Heart right ventricle (tissue), 16 donors: ENCODE measurements at regions of chr6 and their contacts with region 1.

Region 1: DNA sequence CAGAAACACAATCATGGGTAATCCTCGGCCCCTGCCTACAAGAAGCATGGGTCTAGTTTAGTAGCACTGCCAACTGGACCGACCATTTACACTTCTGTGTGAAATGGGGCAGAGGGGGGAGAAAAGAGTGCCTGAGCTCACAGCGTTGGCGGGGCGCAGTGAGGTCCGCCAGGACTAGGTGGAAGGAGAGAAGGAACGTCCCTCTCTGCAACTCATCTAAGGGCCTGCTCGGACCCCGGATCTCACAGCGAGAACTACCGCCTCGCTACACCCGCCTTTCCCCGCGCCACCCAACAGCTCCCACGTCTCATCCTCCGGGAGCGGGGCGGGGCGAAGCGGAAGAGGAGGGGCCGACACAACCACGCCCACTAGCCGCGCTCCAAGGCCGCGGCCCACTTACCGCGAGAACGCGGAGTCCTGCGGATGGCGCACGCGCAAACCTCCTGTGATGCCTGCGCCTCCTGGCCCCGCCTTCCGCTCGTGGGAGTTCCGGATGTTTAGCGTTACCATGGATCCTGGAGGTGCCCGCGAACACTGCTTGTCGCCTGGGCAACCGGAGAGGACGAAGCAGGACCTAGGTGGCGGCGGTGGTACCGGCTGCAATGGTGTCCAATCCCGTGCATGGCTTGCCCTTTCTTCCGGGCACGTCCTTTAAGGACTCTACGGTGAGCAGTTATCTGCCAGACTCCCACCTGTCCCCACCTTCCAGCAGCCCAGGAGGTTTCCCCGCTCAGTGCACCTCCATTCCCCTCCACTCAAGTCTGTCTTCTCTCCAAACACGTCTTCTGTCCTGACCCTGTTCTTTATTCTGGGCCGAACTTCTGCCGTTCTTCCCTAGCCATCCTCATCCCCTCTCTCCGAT is at the start of gene EFHC1:
- DNase-seq: peak; percentile 98 to 99
- ATAC-seq: peak; percentile 96 to 98 (median 97)
- H3K4me3 ChIP-seq: peak within 1 kb of the TSS; percentile 60 to 91 (median 80)
- H3K27ac ChIP-seq: peak within 1 kb of the TSS; percentile 52 to 94 (median 87)
- H3K4me1 ChIP-seq: peaks cover 0 to 62% (median 23%) of the 10 kb centered on the region in 9 donors
- H3K27me3 ChIP-seq: no peaks in the 10 kb centered on the region
- CTCF ChIP-seq: peak in 1 of 9 donors; percentile 3
- total RNA-seq, gene EFHC1: 3.3 to 7.6 (median 5.8) TPM

Region 2: DNA sequence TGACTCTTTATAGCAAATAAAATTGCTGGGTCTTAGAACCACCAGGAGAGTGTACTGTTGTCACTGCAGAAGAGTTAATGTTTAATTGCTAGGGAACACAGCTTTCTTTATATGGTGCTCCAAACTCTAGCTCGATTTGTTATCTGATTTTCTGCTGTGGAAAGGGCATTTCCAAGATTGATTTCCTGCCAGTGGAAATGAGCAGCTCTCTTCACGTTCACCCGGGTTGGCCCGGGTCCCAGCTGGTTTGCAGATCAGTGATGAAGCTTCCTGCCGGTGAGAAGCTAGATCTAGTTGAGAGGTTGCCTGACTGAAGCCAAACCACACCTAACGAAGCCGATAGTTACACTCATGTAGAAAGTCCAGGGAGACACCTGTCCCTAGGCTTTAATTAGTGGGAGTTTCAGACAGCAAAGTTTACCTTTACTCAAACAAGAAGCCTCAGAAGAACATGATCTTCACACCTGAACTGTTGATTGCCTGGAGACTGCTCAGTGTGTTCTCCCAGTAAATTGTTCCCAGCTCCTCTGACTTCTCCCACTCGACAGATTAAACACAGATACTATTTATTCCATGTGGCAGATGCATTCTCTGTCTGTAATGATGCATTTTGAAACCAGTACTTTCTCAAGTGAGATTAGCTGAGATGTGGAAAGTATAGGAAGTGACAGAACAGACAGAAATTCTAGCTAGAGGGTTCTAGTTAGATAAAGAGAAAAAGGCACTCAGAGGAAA is 30.2 kb before region 1 on chr6:
- intact Hi-C with region 1: no loop called
- DNase-seq: peak in 1 of 2 donors; percentile 54
- ATAC-seq: peak in 6 of 8 donors; percentile 51 to 79 (median 70)
- H3K4me3 ChIP-seq: no peak overlapping the region
- H3K27ac ChIP-seq: peak overlapping the region in 3 of 10 donors; percentile 12 to 70 (median 34)
- H3K4me1 ChIP-seq: peaks cover 3 to 27% (median 17%) of the 10 kb centered on the region in 9 donors
- H3K27me3 ChIP-seq: no peaks in the 10 kb centered on the region
- CTCF ChIP-seq: no peak

Region 3: GRCh38 chr6:52497652-52498408 is 77.8 kb after region 1 on chr6:
- intact Hi-C with region 1: loop called in 7 of 10 experiments (anchors 2 to 5 kb)
- DNase-seq: peak in 1 of 2 donors; percentile 75
- ATAC-seq: peak in 6 of 8 donors; percentile 20 to 55 (median 36)
- H3K4me3 ChIP-seq: no peak overlapping the region
- H3K27ac ChIP-seq: peak overlapping the region in 9 of 10 donors; percentile 76 to 90 (median 86)
- H3K4me1 ChIP-seq: peaks cover 13 to 63% (median 42%) of the 10 kb centered on the region in 9 donors
- H3K27me3 ChIP-seq: no peaks in the 10 kb centered on the region
- CTCF ChIP-seq: no peak

Region 4: GRCh38 chr6:52503848-52504781 is 84.1 kb after region 1 on chr6:
- intact Hi-C with region 1: loop called in 9 of 10 experiments (anchors 2 to 5 kb)
- DNase-seq: peak; percentile 88 to 91
- ATAC-seq: peak; percentile 79 to 92 (median 88)
- H3K4me3 ChIP-seq: peak overlapping the region in 1 of 10 donors; percentile 4
- H3K27ac ChIP-seq: peak overlapping the region; percentile 50 to 91 (median 80)
- H3K4me1 ChIP-seq: peaks cover 19 to 79% (median 48%) of the 10 kb centered on the region in 9 donors
- H3K27me3 ChIP-seq: no peaks in the 10 kb centered on the region
- CTCF ChIP-seq: no peak

Region 5: DNA sequence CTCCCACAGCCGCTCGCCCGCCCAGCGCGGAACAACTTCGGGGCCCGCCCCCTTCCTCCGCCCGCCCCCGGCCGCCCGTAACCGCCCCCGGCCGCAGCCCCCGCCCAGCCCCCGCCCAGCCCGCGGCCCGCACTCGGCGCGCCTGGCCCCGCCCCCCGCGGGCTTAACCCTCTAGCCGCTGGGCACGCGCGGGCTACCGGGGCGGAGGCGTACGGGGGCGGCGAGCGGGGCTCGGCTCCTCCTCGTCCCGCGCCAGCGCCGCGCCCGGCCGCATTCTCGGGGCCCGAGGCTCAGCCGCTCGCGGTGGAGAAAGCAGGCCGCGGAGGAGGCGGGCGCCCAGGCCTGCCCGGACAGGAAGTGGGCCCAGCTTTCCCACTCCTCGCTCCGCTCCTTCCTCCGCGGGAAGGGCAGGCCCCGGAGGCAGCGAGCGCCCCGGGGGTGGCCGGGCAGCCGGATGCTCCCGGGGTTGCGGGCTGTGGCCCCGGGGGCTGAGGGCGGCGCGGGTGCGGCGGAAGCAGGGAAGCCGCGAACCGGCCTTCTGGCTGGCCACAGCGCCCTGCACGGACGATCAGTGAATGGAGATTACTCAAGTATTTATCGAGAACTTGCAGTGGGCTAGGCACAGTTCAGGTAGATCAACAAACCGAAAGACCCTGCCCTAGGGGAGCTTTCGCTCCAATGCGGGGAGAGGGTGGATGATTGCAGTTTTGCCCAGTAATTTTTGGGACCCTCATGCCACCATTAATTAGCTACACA is 157.2 kb after region 1 on chr6 and contains the start of gene TRAM2:
- intact Hi-C with region 1: loop called in 7 of 10 experiments (anchors 1 to 5 kb)
- DNase-seq: peak; percentile 86 to 91
- ATAC-seq: peak; percentile 75 to 94 (median 88)
- H3K4me3 ChIP-seq: peak within 1 kb of the TSS; percentile 71 to 97 (median 86)
- H3K27ac ChIP-seq: peak within 1 kb of the TSS; percentile 96 to 100 (median 99)
- H3K4me1 ChIP-seq: peaks cover 0 to 56% (median 51%) of the 10 kb centered on the region in 9 donors
- H3K27me3 ChIP-seq: no peaks in the 10 kb centered on the region
- CTCF ChIP-seq: peak in 6 of 9 donors; percentile 7 to 44 (median 14)
- total RNA-seq, gene TRAM2: 7.9 to 17.3 (median 11.0) TPM

Region 6: DNA sequence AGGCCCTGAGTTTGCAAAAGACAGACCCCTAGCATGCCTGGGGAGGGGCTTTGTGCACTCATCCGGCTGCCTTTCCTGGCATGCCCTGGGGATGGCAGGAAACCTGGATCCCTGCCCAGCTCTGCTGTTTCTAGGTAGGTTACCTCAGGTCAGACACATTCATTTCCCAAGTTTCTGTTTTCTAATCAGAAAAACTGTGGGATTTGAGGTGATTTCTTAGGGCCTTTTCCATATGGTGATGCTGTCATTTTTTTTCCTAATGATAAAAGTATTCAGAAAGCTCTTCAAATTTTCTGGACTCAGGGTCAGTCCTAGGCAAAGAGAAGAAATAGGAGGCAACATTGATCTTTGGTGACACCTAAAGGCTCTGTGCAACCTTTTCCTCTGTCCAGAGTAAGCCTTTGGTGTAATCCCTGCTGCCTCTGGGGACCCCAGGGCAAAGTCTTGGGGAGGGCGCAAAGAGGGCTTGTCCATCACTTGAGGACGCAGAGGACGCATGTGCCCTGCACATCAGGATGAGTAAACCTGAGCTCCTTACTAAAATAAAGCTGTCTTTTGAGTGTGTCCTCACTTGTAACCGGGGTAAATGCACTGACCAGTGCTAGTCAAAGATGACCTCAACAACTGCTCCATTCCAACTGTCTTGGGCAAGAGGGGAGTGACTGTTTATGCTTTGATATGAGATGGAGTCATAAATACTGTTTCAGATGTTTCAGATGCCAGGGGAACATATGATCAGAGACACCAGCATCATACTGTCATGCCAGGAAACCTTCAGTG is 170.3 kb after region 1 on chr6:
- intact Hi-C with region 1: loop called in 7 of 10 experiments (anchors 2 to 5 kb)
- DNase-seq: peak; percentile 35 to 59
- ATAC-seq: peak in 7 of 8 donors; percentile 49 to 84 (median 71)
- H3K4me3 ChIP-seq: no peak overlapping the region
- H3K27ac ChIP-seq: peak overlapping the region in 1 of 10 donors; percentile 2
- H3K4me1 ChIP-seq: peaks cover 7 to 45% (median 32%) of the 10 kb centered on the region in 9 donors
- H3K27me3 ChIP-seq: no peaks in the 10 kb centered on the region
- CTCF ChIP-seq: peak in 7 of 9 donors; percentile 18 to 52 (median 41)

Region 7: GRCh38 chr6:52664186-52664990 is 244.3 kb after region 1 on chr6:
- intact Hi-C with region 1: loop called (anchors 1 to 5 kb)
- DNase-seq: peak; percentile 91 to 92
- ATAC-seq: peak; percentile 97 to 99 (median 99)
- H3K4me3 ChIP-seq: peak overlapping the region; percentile 24 to 83 (median 71)
- H3K27ac ChIP-seq: peak overlapping the region in 9 of 10 donors; percentile 43 to 80 (median 74)
- H3K4me1 ChIP-seq: peaks cover 0 to 21% (median 8%) of the 10 kb centered on the region in 9 donors
- H3K27me3 ChIP-seq: peaks cover 0 to 19% (median 0%) of the 10 kb centered on the region in 7 donors
- CTCF ChIP-seq: no peak

Region 8: GRCh38 chr6:52858416-52858815 is 438.4 kb after region 1 on chr6:
- intact Hi-C with region 1: no loop called
- DNase-seq: no peak
- ATAC-seq: no peak
- H3K4me3 ChIP-seq: no peak overlapping the region
- H3K27ac ChIP-seq: no peak overlapping the region
- H3K4me1 ChIP-seq: no peaks in the 10 kb centered on the region
- H3K27me3 ChIP-seq: peaks cover 0 to 28% (median 8%) of the 10 kb centered on the region in 7 donors
- CTCF ChIP-seq: no peak